B cell (primary cell): ENCODE measurements at regions of chr22 and their contacts with region 1.

Region 1: DNA sequence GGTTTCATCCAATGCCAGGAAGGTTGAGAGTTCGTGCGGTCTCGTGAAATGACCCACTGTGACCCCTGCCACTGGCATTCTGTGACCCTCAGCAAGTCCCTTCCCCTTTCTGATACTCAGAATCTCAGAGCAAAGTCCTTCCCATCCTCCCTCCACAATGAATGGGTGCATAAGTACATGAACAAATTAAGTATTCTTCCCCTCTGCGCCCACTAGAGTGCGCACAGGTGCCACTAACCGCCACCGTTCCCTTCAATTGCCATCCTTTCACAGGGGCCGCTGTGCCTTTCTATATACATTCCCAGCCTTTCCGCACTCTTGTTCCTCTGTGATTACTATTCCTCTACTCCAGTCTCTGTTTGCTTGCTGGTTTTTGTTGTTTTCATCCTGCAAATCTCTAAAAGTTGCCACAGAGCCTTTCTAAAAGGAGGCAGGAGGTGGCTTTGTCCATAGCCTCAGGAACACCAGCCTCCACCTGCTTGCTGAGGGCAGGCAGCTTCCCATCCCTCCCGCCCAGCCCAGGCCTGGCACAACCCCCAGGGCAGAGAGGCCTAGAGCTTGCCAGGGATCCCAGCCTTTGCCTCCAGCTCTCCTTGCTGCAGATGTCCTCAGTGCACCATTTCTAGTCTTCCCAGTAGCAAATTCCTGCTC is 6.7 kb upstream of the AP1B1 start:
- DNase-seq: peak; percentile 86
- ATAC-seq: peak; percentile 96
- H3K4me3 ChIP-seq: no peak overlapping the region
- H3K4me3 Mint-ChIP-seq: no peak overlapping the region
- H3K27ac ChIP-seq: no peak overlapping the region
- H3K27ac Mint-ChIP-seq: no peak overlapping the region
- H3K4me1 ChIP-seq: peaks cover 6 to 13% of the 10 kb centered on the region in 2 donors
- H3K4me1 Mint-ChIP-seq: peaks cover 10% of the 10 kb centered on the region
- H3K27me3 ChIP-seq: no peaks in the 10 kb centered on the region
- H3K27me3 Mint-ChIP-seq: no peaks in the 10 kb centered on the region
- CTCF ChIP-seq: peak; percentile 89

Region 2: DNA sequence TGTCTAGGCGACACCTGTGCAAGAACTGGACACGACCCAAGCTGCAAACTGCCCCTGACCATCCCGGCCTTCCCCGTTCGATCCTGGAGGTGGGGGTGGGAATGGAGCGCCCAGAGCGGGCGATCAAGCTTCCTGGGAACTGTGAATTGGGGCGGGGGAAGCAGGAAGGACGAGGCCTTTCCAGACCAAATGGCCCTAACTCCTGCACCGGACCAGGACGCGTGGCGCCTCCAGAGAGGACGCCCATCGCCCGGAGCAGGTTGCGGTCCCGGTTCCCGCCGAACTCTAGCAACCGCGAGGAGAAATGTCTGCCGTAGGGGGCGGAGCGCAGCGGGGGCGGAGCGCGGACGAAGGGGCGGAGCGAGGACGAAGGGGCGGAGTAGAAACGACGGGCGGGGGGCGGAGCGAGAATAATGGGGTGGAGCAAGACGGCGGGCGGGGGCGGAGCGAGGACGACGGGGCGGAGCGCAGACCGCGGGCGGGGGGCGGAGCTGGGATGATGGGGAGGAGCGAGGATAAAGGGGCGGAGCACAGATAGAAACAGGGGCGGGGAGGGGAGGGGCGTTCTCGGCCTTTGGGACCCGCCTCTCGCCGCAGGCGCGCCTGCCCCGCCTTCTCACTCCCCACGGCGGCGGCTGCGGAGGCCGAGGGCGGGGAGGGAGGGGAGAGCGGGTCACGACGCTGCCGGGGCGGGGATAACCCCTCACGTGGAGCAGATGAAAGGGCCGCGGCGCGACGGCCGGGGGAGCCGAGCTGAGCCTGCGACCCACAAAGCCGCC is 512.0 kb before region 1 on chr22 and contains the start of gene ZNRF3:
- CTCF ChIA-PET with region 1: no interaction called
- POLR2A ChIA-PET with region 1: no interaction called
- intact Hi-C with region 1: no loop called
- DNase-seq: peak; percentile 92
- ATAC-seq: peak; percentile 93
- H3K4me3 ChIP-seq: peak within 1 kb of the TSS in 4 of 5 experiments; percentile 65 to 85 (median 69)
- H3K4me3 Mint-ChIP-seq: peak within 1 kb of the TSS; percentile 88
- H3K27ac ChIP-seq: no peak within 1 kb of the TSS
- H3K27ac Mint-ChIP-seq: peak within 1 kb of the TSS; percentile 56
- H3K4me1 ChIP-seq: peaks cover 11 to 15% of the 10 kb centered on the region in 2 donors
- H3K4me1 Mint-ChIP-seq: peaks cover 24% of the 10 kb centered on the region
- H3K27me3 ChIP-seq: peaks cover 0 to 25% (median 23%) of the 10 kb centered on the region in 4 experiments
- H3K27me3 Mint-ChIP-seq: peaks cover 22% of the 10 kb centered on the region
- CTCF ChIP-seq: no peak
- total RNA-seq, gene ZNRF3: 0.70 and 0.71 TPM in 2 replicates

Region 3: GRCh38 chr22:29195118-29195963 is 199.7 kb before region 1 on chr22:
- CTCF ChIA-PET with region 1: no interaction called
- POLR2A ChIA-PET with region 1: no interaction called
- intact Hi-C with region 1: no loop called
- DNase-seq: no peak
- ATAC-seq: no peak
- H3K4me3 ChIP-seq: no peak overlapping the region
- H3K4me3 Mint-ChIP-seq: no peak overlapping the region
- H3K27ac ChIP-seq: no peak overlapping the region
- H3K27ac Mint-ChIP-seq: no peak overlapping the region
- H3K4me1 ChIP-seq: no peaks in the 10 kb centered on the region
- H3K4me1 Mint-ChIP-seq: no peaks in the 10 kb centered on the region
- H3K27me3 ChIP-seq: peaks cover 0 to 19% (median 6%) of the 10 kb centered on the region in 4 experiments
- H3K27me3 Mint-ChIP-seq: peaks cover 41% of the 10 kb centered on the region
- CTCF ChIP-seq: no peak

Region 4: GRCh38 chr22:29408945-29409344 is 13.9 kb after region 1 on chr22:
- CTCF ChIA-PET with region 1: interaction called, 6 read pairs
- POLR2A ChIA-PET with region 1: no interaction called
- intact Hi-C with region 1: loop called (anchors 2 kb)
- DNase-seq: no peak
- ATAC-seq: no peak
- H3K4me3 ChIP-seq: no peak overlapping the region
- H3K4me3 Mint-ChIP-seq: no peak overlapping the region
- H3K27ac ChIP-seq: no peak overlapping the region
- H3K27ac Mint-ChIP-seq: no peak overlapping the region
- H3K4me1 ChIP-seq: peaks cover 27 to 32% of the 10 kb centered on the region in 2 donors
- H3K4me1 Mint-ChIP-seq: peaks cover 30% of the 10 kb centered on the region
- H3K27me3 ChIP-seq: no peaks in the 10 kb centered on the region
- H3K27me3 Mint-ChIP-seq: no peaks in the 10 kb centered on the region
- CTCF ChIP-seq: no peak

Region 5: GRCh38 chr22:29480512-29481264 is 85.6 kb after region 1 on chr22:
- CTCF ChIA-PET with region 1: interaction called, 4 read pairs
- POLR2A ChIA-PET with region 1: no interaction called
- intact Hi-C with region 1: loop called (anchors 5 kb)
- DNase-seq: peak; percentile 61
- ATAC-seq: no peak
- H3K4me3 ChIP-seq: peak overlapping the region in 2 of 5 experiments; percentile 8 to 24
- H3K4me3 Mint-ChIP-seq: peak overlapping the region; percentile 79
- H3K27ac ChIP-seq: no peak overlapping the region
- H3K27ac Mint-ChIP-seq: no peak overlapping the region
- H3K4me1 ChIP-seq: peaks cover 30 to 38% of the 10 kb centered on the region in 2 donors
- H3K4me1 Mint-ChIP-seq: peaks cover 38% of the 10 kb centered on the region
- H3K27me3 ChIP-seq: peaks cover 0 to 64% (median 43%) of the 10 kb centered on the region in 4 experiments
- H3K27me3 Mint-ChIP-seq: peaks cover 35% of the 10 kb centered on the region
- CTCF ChIP-seq: no peak

Region 6: DNA sequence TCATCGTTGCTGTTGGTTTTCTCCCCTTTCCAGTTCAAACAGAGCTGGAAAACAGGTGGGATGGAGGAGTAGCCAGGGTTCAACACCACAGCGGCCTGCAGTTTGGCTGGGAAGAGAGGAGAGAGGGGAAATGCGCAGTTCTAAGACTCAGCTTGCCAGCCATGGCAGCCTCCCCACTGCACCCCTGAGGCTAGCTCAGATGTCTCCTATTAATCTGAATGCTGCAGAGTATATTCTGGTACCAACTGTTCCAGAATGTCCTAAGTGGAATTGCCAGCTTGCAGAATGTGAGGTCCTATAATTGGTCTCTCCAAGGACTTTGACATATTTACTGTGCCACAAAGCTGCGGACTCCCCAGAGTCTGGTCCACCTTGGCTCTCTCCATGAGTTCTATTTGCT is 117.0 kb after region 1 on chr22:
- CTCF ChIA-PET with region 1: interaction called, 12 read pairs
- POLR2A ChIA-PET with region 1: no interaction called
- intact Hi-C with region 1: no loop called
- DNase-seq: no peak
- ATAC-seq: no peak
- H3K4me3 ChIP-seq: no peak overlapping the region
- H3K4me3 Mint-ChIP-seq: no peak overlapping the region
- H3K27ac ChIP-seq: no peak overlapping the region
- H3K27ac Mint-ChIP-seq: no peak overlapping the region
- H3K4me1 ChIP-seq: no peaks in the 10 kb centered on the region
- H3K4me1 Mint-ChIP-seq: peaks cover 3% of the 10 kb centered on the region
- H3K27me3 ChIP-seq: no peaks in the 10 kb centered on the region
- H3K27me3 Mint-ChIP-seq: no peaks in the 10 kb centered on the region
- CTCF ChIP-seq: no peak

Region 7: GRCh38 chr22:29524440-29525191 is 129.6 kb after region 1 on chr22:
- CTCF ChIA-PET with region 1: interaction called, 106 read pairs
- POLR2A ChIA-PET with region 1: interaction called, 3 read pairs
- intact Hi-C with region 1: loop called (anchors 1 kb)
- DNase-seq: peak; percentile 61
- ATAC-seq: peak; percentile 91
- H3K4me3 ChIP-seq: no peak overlapping the region
- H3K4me3 Mint-ChIP-seq: no peak overlapping the region
- H3K27ac ChIP-seq: no peak overlapping the region
- H3K27ac Mint-ChIP-seq: no peak overlapping the region
- H3K4me1 ChIP-seq: no peaks in the 10 kb centered on the region
- H3K4me1 Mint-ChIP-seq: no peaks in the 10 kb centered on the region
- H3K27me3 ChIP-seq: no peaks in the 10 kb centered on the region
- H3K27me3 Mint-ChIP-seq: no peaks in the 10 kb centered on the region
- CTCF ChIP-seq: peak; percentile 63

Region 8: DNA sequence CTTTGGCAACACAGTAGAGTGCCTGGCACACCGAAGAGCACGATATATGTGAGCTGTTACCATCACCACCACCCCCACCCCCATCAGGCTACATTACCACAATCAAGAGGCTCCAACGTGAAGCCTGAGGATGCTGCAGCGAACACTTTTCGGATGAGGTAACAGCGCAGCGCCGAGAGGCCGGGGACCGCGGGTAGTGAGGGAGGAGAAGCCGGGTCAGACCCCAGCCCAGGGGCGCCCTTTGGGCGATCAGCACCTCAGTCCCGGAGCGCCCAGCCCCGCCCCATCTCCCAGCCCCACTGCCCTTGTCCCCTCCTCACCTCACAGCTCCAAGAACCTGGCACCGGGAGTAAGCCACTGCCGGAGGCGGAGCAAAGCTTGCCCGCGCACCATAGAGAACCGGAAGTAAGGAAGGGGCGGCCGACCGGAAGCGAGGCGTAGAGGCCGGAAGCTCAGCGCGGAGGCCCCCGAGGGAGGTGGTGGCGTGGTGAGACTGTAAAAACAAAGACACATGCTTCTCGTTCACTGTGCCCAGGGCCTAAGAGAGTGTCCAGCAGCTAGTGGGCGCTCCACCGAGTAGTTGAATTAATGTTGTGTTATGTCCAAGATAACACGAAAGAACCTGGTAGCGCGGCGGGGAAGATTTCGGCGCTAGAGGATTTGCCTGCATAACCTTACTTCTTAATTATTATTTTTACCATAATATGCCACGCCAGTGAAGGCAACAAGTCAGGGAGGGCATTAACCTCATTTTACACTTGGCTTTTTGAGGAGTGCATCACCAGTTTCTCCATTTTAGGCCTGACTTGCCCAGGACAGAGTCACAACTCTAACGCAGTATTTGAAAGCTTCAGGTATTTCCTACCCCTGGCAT is 158.5 kb after region 1 on chr22 and contains the start of gene THOC5:
- CTCF ChIA-PET with region 1: interaction called, 12 read pairs
- POLR2A ChIA-PET with region 1: no interaction called
- intact Hi-C with region 1: no loop called
- DNase-seq: peak; percentile 89
- ATAC-seq: peak; percentile 93
- H3K4me3 ChIP-seq: peak within 1 kb of the TSS; percentile 80 to 93 (median 92)
- H3K4me3 Mint-ChIP-seq: peak within 1 kb of the TSS; percentile 89
- H3K27ac ChIP-seq: peak within 1 kb of the TSS; percentile 66 to 79
- H3K27ac Mint-ChIP-seq: peak within 1 kb of the TSS; percentile 96
- H3K4me1 ChIP-seq: peaks cover 7 to 15% of the 10 kb centered on the region in 2 donors
- H3K4me1 Mint-ChIP-seq: peaks cover 23% of the 10 kb centered on the region
- H3K27me3 ChIP-seq: no peaks in the 10 kb centered on the region
- H3K27me3 Mint-ChIP-seq: no peaks in the 10 kb centered on the region
- CTCF ChIP-seq: no peak
- total RNA-seq, gene THOC5: 59.1 and 66.2 TPM in 2 replicates

Region 9: DNA sequence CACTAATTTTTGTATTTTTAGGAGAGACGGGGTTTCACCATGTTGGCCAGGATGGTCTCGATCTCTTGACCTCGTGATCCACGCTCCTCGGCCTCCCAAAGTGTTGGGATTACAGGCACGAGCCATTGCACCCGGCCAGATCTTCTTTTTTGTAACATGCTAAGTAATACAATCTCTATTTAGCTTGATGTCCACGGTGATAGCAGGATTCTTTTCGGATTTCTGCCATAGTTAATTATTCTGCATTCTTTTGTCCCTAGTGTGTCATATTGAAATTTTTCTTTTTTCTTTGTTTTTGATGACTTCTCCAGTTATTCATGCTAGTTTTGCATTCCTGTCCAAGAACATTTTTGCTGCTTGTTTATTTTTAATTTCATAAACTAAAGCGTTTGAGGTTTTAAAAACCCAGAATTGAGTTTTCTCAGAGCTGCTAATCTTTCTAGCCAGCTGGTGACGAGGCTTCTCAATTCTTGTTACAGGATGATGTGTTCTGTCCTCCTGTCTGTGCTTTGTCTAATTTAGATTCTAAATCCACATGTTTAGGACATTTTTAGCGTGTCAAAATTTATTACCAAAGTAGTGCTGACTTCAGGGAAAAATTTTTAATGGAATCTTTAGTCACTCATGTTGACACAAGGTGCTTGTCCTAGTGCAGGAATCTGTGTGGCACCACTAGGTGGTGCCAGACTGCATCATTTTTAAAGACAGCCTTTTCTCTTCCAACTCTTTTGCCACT is 230.2 kb after region 1 on chr22:
- CTCF ChIA-PET with region 1: interaction called, 3 read pairs
- POLR2A ChIA-PET with region 1: no interaction called
- intact Hi-C with region 1: loop called (anchors 1 kb)
- DNase-seq: peak; percentile 59
- ATAC-seq: peak; percentile 28
- H3K4me3 ChIP-seq: no peak overlapping the region
- H3K4me3 Mint-ChIP-seq: no peak overlapping the region
- H3K27ac ChIP-seq: no peak overlapping the region
- H3K27ac Mint-ChIP-seq: no peak overlapping the region
- H3K4me1 ChIP-seq: peaks cover 26 to 27% of the 10 kb centered on the region in 2 donors
- H3K4me1 Mint-ChIP-seq: peaks cover 48% of the 10 kb centered on the region
- H3K27me3 ChIP-seq: no peaks in the 10 kb centered on the region
- H3K27me3 Mint-ChIP-seq: no peaks in the 10 kb centered on the region
- CTCF ChIP-seq: peak; percentile 98